Colonic mucosa (tissue), 4 donors: ENCODE measurements at regions of chr20 and their contacts with region 1.

Region 1: DNA sequence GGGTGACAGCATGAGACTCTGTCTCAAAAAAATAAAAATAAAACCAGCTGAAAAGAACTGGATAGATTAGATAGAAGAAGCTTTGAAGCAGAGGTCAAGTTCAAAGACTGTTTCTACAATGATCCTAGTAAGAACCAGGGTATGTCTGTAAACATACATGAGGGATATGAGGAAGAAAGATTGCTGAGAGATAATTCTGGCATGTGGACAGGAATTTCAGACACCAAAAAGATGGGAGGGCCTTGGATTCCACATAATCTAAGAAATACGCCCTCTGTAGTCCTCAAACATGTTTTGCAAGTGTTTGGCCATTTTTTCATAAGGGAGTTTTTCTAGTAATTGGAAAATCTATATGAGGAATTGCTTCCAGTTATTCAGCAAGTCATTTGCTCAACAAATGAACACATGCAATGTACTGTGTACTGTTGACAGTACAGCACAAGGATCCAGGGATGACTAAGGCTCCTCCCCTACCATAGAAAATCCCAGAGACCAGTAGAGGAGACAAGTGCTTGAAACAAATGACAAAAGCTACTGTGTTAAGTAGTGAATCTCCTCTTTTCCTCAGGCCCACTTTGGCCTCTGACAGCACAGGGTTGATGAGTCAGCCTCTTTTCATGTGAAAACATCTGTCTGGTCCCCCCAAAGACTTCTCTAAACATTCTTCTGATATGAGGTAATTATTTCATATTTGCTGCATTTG is 795.9 kb downstream of the MAFB start:
- DNase-seq: no peak
- H3K4me3 ChIP-seq: no peak overlapping the region
- H3K27ac ChIP-seq: no peak overlapping the region
- H3K4me1 ChIP-seq: no peaks in the 10 kb centered on the region
- H3K27me3 ChIP-seq: no peaks in the 10 kb centered on the region
- CTCF ChIP-seq: no peak

Region 2: GRCh38 chr20:39800548-39800947 is 92.6 kb before region 1 on chr20:
- intact Hi-C with region 1: no loop called
- DNase-seq: no peak
- H3K4me3 ChIP-seq: no peak overlapping the region
- H3K27ac ChIP-seq: no peak overlapping the region
- H3K4me1 ChIP-seq: no peaks in the 10 kb centered on the region
- H3K27me3 ChIP-seq: no peaks in the 10 kb centered on the region
- CTCF ChIP-seq: no peak

Region 3: DNA sequence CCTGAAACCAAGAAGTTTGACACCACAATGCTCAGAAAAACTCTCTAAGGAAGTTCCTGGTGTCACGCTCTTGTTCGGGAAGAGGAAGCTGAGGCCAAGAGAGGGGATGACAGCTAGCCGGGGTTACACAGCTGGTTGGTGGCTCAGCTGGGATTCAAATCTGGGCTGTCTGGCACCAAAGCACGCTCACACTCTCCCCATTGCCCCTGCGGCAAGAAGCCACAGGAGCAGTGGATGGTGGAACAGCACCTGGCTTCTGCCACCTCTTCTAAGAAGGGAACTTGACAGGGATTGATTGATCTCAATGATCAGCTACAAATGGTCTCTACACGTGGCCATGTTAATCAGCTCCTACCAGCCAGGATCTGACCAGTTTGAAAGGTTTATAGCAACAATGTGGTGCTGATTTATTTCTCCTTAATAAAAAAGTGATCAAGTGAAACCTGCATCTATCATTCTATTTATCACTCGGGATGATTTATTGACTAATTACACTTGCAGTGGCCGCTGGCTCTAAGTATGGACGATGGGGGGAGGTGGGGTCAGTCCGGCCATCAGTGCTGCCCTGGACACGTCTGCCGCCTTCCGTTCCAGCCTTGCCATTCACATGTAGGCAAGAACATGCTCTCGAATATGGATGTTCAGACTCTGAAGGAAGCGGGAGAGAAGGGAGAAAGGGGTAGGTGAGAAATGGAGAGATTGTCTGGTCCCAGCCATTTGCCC is 1063.6 kb after region 1 on chr20:
- intact Hi-C with region 1: loop called (anchors 10 kb)
- DNase-seq: peak; percentile 15
- H3K4me3 ChIP-seq: no peak overlapping the region
- H3K27ac ChIP-seq: no peak overlapping the region
- H3K4me1 ChIP-seq: no peaks in the 10 kb centered on the region
- H3K27me3 ChIP-seq: no peaks in the 10 kb centered on the region
- CTCF ChIP-seq: no peak